GM10248 (cell line): ENCODE measurements at regions of chr6 and their contacts with region 1.

Region 1: GRCh38 chr6:74091136-74091793 is 395.3 kb downstream of the CD109 start:
- DNase-seq: peak; percentile 15
- CTCF ChIP-seq: peak; percentile 39

Region 2: GRCh38 chr6:73797861-73798260 is 293.4 kb before region 1 on chr6:
- CTCF ChIA-PET with region 1: no interaction called
- POLR2A ChIA-PET with region 1: no interaction called
- DNase-seq: no peak
- CTCF ChIP-seq: no peak

Region 3: DNA sequence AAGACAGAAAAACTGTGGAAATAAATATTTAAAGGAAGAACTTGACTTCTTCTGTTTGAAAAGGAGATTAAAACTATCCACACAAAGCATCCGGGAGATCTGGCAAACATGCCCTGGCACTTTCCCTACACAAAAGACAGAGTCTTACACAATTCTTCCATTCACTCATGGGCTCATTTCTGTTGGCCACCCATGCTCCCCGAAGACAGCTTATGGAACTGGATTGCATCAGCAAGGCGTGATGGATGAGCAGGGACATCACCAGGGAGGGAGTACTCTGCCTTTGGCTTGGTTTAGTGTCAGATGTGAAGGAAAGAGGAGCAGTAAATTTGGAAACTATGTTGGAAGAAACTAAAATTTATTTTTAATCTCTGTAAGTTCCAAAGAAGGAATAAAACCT is 15.9 kb before region 1 on chr6:
- CTCF ChIA-PET with region 1: interaction called, 24 read pairs
- POLR2A ChIA-PET with region 1: no interaction called
- DNase-seq: no peak
- CTCF ChIP-seq: no peak

Region 4: DNA sequence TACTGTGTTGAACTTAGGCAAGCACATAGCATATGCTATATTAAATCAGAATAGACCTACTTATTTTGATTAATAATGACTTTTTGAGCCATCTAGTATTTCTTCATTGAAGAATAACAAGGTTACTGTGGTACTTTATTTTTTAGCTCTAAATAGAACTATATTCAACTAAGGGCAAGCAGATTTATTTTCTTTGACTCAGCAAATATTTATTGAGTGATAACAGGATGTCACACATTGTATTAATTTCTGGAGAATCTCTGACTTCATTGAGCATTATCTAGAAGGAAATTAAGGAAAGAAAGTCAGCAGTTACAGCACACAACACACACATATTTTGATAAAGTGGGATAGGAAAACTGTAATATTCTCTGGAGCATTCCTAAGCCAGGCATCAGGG is 12.2 kb after region 1 on chr6:
- CTCF ChIA-PET with region 1: interaction called, 17 read pairs
- POLR2A ChIA-PET with region 1: no interaction called
- DNase-seq: no peak
- CTCF ChIP-seq: no peak

Region 5: DNA sequence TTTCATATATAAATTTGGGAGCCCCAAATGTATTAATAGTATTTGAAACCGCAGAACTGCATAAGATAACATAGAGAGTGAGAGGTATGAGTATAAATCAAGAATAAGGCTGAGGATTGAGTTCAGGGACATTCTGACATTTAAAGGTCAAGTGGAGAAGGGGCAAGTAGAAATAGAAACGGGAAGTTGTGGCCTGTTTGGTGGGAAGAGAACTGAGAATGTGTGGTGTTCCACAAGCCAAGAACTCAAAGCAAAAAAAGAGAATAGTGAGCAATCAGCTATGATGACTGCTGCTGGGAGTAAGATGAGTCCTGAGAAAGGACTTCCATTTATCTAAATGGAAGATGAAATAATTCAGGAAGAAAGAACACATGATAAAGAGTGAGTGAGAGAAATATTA is 23.2 kb after region 1 on chr6:
- CTCF ChIA-PET with region 1: interaction called, 12 read pairs
- POLR2A ChIA-PET with region 1: no interaction called
- DNase-seq: peak; percentile 8
- CTCF ChIP-seq: no peak

Region 6: DNA sequence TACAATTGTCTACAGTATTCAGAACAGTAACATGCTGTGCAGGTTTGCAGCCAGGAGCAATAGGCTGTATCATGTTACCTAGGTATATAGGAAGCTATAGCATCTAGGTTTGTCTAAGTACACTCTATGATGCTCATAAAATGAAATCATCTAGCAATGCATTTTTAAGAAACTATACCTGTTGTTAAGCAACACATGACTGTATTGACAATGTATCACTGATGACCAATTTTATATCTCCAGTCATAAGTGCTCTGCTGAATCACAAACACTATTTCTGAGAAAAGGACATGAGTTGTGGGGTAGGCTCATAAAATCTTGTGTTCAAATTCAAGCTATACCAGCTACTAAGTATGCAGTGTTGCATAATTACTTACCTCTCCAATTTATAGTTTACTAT is 106.0 kb after region 1 on chr6:
- CTCF ChIA-PET with region 1: no interaction called
- POLR2A ChIA-PET with region 1: no interaction called
- DNase-seq: no peak
- CTCF ChIP-seq: no peak